MCF 10A (cell line): ENCODE measurements at regions of chr2 and their contacts with region 1.

Region 1: GRCh38 chr2:100262555-100263320 is 59.6 kb downstream of the LONRF2 start:
- DNase-seq: peak; percentile 69
- H3K4me3 Mint-ChIP-seq: no peak overlapping the region
- H3K27ac Mint-ChIP-seq: no peak overlapping the region
- H3K4me1 Mint-ChIP-seq: peaks cover 5% of the 10 kb centered on the region
- H3K27me3 Mint-ChIP-seq: no peaks in the 10 kb centered on the region
- CTCF ChIP-seq: peak; percentile 91

Region 2: GRCh38 chr2:99624677-99625076 is 638.1 kb before region 1 on chr2:
- CTCF ChIA-PET with region 1: no interaction called
- POLR2A ChIA-PET with region 1: no interaction called
- intact Hi-C with region 1: no loop called
- DNase-seq: no peak
- H3K4me3 Mint-ChIP-seq: no peak overlapping the region
- H3K27ac Mint-ChIP-seq: no peak overlapping the region
- H3K4me1 Mint-ChIP-seq: no peaks in the 10 kb centered on the region
- H3K27me3 Mint-ChIP-seq: no peaks in the 10 kb centered on the region
- CTCF ChIP-seq: no peak

Region 3: GRCh38 chr2:99811544-99811943 is 451.2 kb before region 1 on chr2:
- CTCF ChIA-PET with region 1: interaction called, 11 read pairs
- POLR2A ChIA-PET with region 1: no interaction called
- intact Hi-C with region 1: no loop called
- DNase-seq: peak; percentile 57
- H3K4me3 Mint-ChIP-seq: no peak overlapping the region
- H3K27ac Mint-ChIP-seq: no peak overlapping the region
- H3K4me1 Mint-ChIP-seq: peaks cover 38% of the 10 kb centered on the region
- H3K27me3 Mint-ChIP-seq: no peaks in the 10 kb centered on the region
- CTCF ChIP-seq: no peak

Region 4: DNA sequence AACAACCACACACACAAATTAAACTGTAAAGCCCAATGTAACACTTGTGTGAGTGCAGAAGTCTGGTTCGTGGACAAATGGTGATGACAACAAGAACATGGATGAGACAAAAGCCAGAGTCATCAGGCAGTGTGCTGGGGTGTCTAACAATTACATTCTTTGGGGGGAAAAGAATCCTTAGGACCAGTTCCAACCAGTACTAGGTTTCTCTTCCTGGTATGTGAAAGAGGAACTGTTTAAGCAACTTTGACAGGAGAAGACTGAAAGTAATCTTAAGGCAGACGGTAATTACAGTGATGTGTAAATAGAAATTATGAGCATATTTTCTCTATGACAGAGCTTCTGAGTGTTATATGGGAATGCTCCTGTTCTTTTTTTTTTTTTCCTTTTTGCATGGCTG is 253.8 kb before region 1 on chr2:
- CTCF ChIA-PET with region 1: no interaction called
- POLR2A ChIA-PET with region 1: no interaction called
- intact Hi-C with region 1: no loop called
- DNase-seq: no peak
- H3K4me3 Mint-ChIP-seq: no peak overlapping the region
- H3K27ac Mint-ChIP-seq: no peak overlapping the region
- H3K4me1 Mint-ChIP-seq: peaks cover 13% of the 10 kb centered on the region
- H3K27me3 Mint-ChIP-seq: no peaks in the 10 kb centered on the region
- CTCF ChIP-seq: no peak

Region 5: DNA sequence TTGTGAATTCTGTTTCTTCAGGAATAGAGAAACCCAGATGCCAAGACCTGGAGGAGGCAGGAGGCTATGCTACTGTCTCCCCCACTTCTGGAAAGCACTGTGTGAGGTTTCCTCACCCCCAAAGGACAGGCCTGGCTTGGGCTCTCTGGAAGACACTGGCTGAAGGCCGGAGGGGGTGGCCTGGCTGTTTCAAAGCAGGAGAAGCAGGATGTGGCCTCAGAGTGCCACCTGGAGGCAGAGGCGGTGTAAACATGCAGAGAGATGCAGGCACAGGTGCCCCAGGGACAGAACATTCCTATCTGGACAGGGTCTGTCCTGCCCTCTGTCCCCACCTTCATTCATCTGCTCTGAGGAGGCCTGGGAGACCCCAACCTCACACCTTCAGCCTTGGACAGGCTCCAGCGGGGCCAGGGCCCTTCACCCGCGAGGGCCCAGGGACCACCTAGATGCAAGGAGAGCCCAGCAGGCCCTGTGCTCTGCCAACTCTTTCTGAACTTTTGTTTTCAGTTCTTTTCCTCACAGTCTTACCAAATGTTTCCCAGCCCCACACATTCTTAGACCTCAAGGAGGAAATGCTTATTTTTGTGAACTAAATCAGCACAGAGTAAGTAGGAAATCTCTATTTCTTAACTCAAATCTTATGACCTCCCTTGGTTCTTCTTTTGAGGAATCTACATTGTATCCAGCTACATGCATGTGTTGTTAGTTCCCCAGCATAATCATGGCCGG is 19.7 kb before region 1 on chr2:
- CTCF ChIA-PET with region 1: interaction called, 21 read pairs
- POLR2A ChIA-PET with region 1: no interaction called
- intact Hi-C with region 1: no loop called
- DNase-seq: peak; percentile 68
- H3K4me3 Mint-ChIP-seq: no peak overlapping the region
- H3K27ac Mint-ChIP-seq: no peak overlapping the region
- H3K4me1 Mint-ChIP-seq: no peaks in the 10 kb centered on the region
- H3K27me3 Mint-ChIP-seq: no peaks in the 10 kb centered on the region
- CTCF ChIP-seq: peak; percentile 91

Region 6: DNA sequence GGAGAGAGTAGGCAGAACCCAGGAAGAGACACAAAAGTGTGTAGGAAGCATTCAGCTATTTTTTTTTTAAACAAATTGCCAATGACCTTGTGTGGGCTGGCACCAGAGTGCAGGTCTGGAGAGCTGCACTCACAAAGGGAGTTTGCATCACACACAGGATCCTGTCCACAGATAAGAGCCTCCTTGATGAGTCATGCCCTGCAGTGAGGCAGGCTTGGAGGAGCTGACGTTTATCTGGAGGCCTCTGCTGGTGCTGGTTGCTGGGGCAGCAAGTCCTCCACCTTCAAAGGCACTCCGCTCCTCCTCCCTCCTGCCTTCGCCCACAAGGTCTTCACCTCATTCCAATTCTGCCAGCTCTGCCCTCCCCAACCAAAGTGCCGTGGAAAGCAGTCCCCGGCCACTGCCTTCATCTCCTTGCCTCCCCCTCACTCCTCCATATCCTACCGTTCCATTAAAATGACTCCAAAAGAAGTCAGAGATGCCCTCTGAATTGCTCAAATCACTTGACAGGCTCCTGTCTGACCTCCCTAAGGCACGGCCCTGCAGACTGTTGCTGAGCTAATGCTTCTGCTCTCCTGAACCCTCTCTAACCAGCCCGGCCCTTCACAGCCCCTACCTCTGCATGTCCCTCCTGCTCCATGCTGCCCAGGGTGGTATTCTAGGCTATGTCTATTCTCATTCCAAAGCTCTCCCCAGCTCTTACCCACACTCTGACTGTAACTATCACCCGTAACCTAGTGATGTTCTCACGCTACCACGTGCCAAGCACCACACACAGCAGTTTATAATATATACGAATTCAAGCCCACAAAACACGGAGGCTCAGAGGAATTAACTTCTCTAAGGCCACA is 28.6 kb after region 1 on chr2:
- CTCF ChIA-PET with region 1: interaction called, 90 read pairs
- POLR2A ChIA-PET with region 1: interaction called, 3 read pairs
- intact Hi-C with region 1: no loop called
- DNase-seq: peak; percentile 89
- H3K4me3 Mint-ChIP-seq: no peak overlapping the region
- H3K27ac Mint-ChIP-seq: no peak overlapping the region
- H3K4me1 Mint-ChIP-seq: no peaks in the 10 kb centered on the region
- H3K27me3 Mint-ChIP-seq: no peaks in the 10 kb centered on the region
- CTCF ChIP-seq: no peak

Region 7: GRCh38 chr2:100381240-100381639 is 118.5 kb after region 1 on chr2:
- CTCF ChIA-PET with region 1: interaction called, 521 read pairs
- POLR2A ChIA-PET with region 1: interaction called, 15 read pairs
- intact Hi-C with region 1: loop called (anchors 1 kb)
- DNase-seq: peak; percentile 88
- H3K4me3 Mint-ChIP-seq: no peak overlapping the region
- H3K27ac Mint-ChIP-seq: no peak overlapping the region
- H3K4me1 Mint-ChIP-seq: peaks cover 8% of the 10 kb centered on the region
- H3K27me3 Mint-ChIP-seq: no peaks in the 10 kb centered on the region
- CTCF ChIP-seq: peak; percentile 86

Region 8: GRCh38 chr2:100812116-100812515 is 549.4 kb after region 1 on chr2:
- CTCF ChIA-PET with region 1: no interaction called
- POLR2A ChIA-PET with region 1: no interaction called
- intact Hi-C with region 1: no loop called
- DNase-seq: no peak
- H3K4me3 Mint-ChIP-seq: no peak overlapping the region
- H3K27ac Mint-ChIP-seq: no peak overlapping the region
- H3K4me1 Mint-ChIP-seq: peaks cover 5% of the 10 kb centered on the region
- H3K27me3 Mint-ChIP-seq: no peaks in the 10 kb centered on the region
- CTCF ChIP-seq: no peak